ENCODE measurements at regions of chr18 and their contacts with region 1.

Region 1: GRCh38 chr18:48951448-48952286 is 902 bp upstream of the SMAD7 start:
- DNase-seq: peak; percentile 84
- ATAC-seq: peak; percentile 42
- H3K4me3 Mint-ChIP-seq: peak overlapping the region; percentile 97
- H3K27ac Mint-ChIP-seq: peak overlapping the region; percentile 88
- H3K4me1 Mint-ChIP-seq: peaks cover 41% of the 10 kb centered on the region
- H3K27me3 Mint-ChIP-seq: no peaks in the 10 kb centered on the region

Region 2: DNA sequence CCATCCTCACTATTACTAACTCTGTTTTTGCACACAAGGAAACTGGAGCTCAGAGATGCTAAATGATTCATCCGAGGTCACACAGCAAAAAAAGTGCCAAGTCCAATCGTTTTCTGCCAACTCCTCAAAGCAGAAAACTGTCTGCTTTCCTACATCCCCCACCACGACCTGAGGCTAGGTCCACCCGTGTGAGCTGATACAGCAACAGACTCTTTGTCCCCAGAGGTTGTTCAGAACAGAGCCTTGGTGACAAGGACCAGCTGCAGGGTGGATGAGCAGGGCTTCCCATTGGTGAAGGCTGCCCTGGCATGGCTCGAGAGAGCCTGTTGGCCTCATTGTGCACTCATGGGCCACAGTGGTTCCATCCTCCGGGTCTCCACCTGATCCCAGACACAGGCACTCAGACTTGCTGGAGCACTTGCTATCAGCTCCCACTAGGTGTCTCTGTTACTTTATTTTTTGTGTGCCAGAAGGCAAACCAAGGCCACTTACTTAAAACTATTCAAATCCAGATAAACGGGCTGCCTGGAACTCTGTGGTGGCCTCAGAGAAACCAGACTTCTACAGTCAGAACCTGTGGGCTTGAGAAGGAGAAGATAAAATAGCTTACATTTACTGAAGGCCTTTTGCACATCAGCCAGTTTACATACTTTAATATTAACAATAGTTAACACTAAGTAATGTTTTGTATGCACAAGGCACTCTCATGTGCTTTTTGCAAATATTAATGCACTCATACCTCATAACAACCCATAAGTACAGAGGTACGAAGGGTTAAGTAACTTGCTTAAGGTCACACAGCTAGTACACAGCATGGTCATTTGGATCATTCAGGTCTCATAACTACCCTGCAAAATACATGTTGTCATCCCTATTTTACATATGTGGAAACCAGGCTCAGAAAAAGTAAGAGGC is 475.8 kb before region 1 on chr18:
- CTCF ChIA-PET with region 1: no interaction called
- POLR2A ChIA-PET with region 1: no interaction called
- intact Hi-C with region 1: no loop called
- DNase-seq: peak; percentile 44
- ATAC-seq: peak; percentile 68
- H3K4me3 Mint-ChIP-seq: no peak overlapping the region
- H3K27ac Mint-ChIP-seq: no peak overlapping the region
- H3K4me1 Mint-ChIP-seq: no peaks in the 10 kb centered on the region
- H3K27me3 Mint-ChIP-seq: peaks cover 22% of the 10 kb centered on the region

Region 3: DNA sequence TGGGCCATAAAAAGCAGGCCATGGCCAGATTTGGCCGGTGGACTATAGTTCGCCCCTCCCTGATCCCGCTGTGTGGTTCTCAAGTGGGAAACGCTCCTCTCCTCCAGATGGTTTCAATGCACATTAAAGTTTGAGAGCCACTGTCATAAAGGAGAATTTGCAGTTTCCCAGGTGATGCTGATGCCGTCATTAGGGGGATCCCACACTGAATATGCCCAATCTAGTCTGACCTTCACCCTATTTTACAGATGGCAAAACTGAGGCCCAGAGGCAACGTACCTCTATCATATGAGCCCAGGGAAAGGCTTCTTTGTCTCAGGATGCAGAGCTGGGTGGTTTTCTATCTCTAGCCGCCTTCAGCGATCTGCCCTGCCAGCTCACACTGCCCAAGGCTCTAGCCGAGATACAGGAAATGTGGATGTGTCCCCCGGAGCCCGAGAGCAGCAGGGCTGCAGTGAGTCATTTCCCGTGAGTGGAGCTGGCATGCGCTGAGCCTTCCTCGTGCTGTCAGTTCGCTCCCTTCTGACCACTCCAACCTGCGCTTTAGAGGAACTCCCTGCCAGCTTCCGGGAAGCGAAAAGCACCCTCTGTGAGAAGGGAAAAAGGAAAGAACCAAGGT is 117.1 kb before region 1 on chr18:
- CTCF ChIA-PET with region 1: no interaction called
- POLR2A ChIA-PET with region 1: no interaction called
- intact Hi-C with region 1: loop called (anchors 1 to 5 kb)
- DNase-seq: peak; percentile 87
- ATAC-seq: peak; percentile 88
- H3K4me3 Mint-ChIP-seq: peak overlapping the region; percentile 73
- H3K27ac Mint-ChIP-seq: peak overlapping the region; percentile 92
- H3K4me1 Mint-ChIP-seq: peaks cover 73% of the 10 kb centered on the region
- H3K27me3 Mint-ChIP-seq: no peaks in the 10 kb centered on the region

Region 4: DNA sequence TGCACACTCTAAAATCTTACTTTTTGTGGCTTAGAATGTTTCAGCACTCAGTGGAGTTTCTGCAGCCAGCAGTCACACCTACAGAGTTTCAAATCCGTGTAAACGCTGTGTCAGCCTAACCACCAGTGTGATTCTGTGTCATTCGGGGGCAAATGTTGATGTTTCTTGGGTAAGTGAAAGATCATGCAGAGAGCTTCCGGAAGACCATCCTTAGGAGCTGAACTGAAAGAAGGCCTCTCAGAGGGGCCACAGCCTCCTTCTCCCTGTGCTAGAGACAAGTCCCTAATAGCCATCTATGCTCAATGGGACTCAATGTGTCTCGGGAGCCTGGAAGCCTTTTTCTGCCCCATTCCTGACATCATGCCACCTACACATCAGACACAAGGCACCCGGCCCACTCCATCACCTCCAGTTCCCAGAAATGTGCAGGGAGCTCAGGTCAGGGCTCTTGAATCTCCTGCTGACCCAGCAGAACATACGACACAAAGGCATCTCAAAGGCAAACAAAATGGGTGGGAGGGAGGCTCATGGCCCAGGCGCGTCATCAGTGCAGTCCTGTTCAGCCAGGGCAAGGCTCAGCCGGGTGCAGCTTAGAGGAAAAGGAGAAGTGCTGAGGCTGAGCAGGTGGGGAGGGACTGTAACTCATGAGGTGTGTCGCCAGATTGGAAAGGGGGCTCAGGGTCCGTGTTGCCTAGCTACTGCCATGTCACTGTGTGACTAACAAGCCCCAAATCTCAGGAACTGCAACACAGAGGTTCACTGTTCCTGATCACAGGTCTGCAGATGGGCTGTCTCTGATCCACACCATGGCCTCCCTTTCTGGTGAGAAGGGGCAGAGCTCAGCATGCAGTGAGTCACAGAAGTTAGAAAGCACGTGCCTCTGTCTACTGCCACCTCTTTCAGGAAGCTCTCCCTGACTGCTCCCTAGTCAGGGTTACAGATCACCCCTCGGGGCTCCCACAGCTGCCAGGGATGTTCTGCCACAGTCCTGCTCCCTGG is 82.9 kb before region 1 on chr18:
- CTCF ChIA-PET with region 1: no interaction called
- POLR2A ChIA-PET with region 1: interaction called, 7 read pairs
- intact Hi-C with region 1: loop called in 1 of 2 experiments (anchors 1 kb)
- DNase-seq: peak; percentile 73
- ATAC-seq: peak; percentile 79
- H3K4me3 Mint-ChIP-seq: peak overlapping the region; percentile 35
- H3K27ac Mint-ChIP-seq: peak overlapping the region; percentile 85
- H3K4me1 Mint-ChIP-seq: peaks cover 34% of the 10 kb centered on the region
- H3K27me3 Mint-ChIP-seq: no peaks in the 10 kb centered on the region

Region 5: GRCh38 chr18:48934723-48935432 is 16.8 kb before region 1 on chr18:
- CTCF ChIA-PET with region 1: interaction called, 8 read pairs
- POLR2A ChIA-PET with region 1: interaction called, 3 read pairs
- intact Hi-C with region 1: loop called (anchors 1 to 2 kb)
- DNase-seq: peak; percentile 10
- ATAC-seq: no peak
- H3K4me3 Mint-ChIP-seq: peak overlapping the region; percentile 60
- H3K27ac Mint-ChIP-seq: peak overlapping the region; percentile 99
- H3K4me1 Mint-ChIP-seq: peaks cover 90% of the 10 kb centered on the region
- H3K27me3 Mint-ChIP-seq: no peaks in the 10 kb centered on the region

Region 6: DNA sequence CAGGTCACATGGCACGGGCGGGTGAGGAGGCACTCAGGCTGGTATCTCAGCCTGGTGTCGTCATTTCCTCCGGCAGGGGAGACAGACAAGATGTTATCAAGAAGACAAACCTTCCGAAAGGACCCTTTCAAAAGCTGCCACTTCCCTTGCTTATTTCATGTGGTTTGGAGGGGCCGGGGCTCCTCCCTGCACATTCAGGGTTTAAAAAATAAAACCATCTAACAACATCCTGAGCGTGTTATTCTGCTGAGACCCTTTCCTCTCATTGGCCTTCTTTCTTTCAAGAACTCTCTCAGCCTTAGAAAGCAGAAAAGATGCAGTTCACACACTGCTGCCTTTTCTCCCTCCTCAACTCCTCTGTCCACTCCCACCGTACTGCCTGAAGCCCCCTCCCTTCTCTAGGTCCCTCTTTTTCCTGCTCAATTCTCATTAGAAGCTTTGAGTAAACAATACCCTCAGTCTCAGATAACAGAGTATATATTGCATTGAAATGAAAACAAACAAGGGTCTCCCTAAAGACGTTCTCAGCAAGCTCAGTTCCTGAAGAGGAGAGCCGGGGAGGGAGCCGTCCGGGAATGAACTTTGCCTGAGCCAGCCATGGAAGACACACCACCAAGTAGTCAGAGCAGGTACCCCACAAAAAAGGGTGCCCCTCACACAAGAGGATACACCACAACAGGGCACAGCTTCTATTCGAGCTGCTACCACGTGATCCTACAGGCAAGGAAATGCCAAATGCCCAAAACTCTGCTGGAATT is 10.6 kb before region 1 on chr18:
- CTCF ChIA-PET with region 1: interaction called, 8 read pairs
- POLR2A ChIA-PET with region 1: interaction called, 3 read pairs
- intact Hi-C with region 1: loop called in 1 of 2 experiments (anchors 1 kb)
- DNase-seq: peak; percentile 82
- ATAC-seq: peak; percentile 88
- H3K4me3 Mint-ChIP-seq: peak overlapping the region; percentile 65
- H3K27ac Mint-ChIP-seq: peak overlapping the region; percentile 95
- H3K4me1 Mint-ChIP-seq: peaks cover 89% of the 10 kb centered on the region
- H3K27me3 Mint-ChIP-seq: no peaks in the 10 kb centered on the region

Region 7: GRCh38 chr18:48975649-48976204 is 24.1 kb after region 1 on chr18:
- CTCF ChIA-PET with region 1: interaction called, 3 read pairs
- POLR2A ChIA-PET with region 1: no interaction called
- intact Hi-C with region 1: loop called in 1 of 2 experiments (anchors 1 kb)
- DNase-seq: peak; percentile 82
- ATAC-seq: peak; percentile 87
- H3K4me3 Mint-ChIP-seq: peak overlapping the region; percentile 66
- H3K27ac Mint-ChIP-seq: no peak overlapping the region
- H3K4me1 Mint-ChIP-seq: peaks cover 11% of the 10 kb centered on the region
- H3K27me3 Mint-ChIP-seq: peaks cover 12% of the 10 kb centered on the region

Region 8: GRCh38 chr18:49486953-49487710 is 535.5 kb after region 1 on chr18 and contains the start of gene C18orf32:
- CTCF ChIA-PET with region 1: no interaction called
- POLR2A ChIA-PET with region 1: no interaction called
- intact Hi-C with region 1: loop called in 1 of 2 experiments (anchors 1 kb)
- DNase-seq: peak; percentile 96
- ATAC-seq: peak; percentile 92
- H3K4me3 Mint-ChIP-seq: peak within 1 kb of the TSS; percentile 95
- H3K27ac Mint-ChIP-seq: peak within 1 kb of the TSS; percentile 100
- H3K4me1 Mint-ChIP-seq: peaks cover 60% of the 10 kb centered on the region
- H3K27me3 Mint-ChIP-seq: no peaks in the 10 kb centered on the region
- total RNA-seq, gene C18orf32: 12.7 to 20.0 TPM

Region 9: DNA sequence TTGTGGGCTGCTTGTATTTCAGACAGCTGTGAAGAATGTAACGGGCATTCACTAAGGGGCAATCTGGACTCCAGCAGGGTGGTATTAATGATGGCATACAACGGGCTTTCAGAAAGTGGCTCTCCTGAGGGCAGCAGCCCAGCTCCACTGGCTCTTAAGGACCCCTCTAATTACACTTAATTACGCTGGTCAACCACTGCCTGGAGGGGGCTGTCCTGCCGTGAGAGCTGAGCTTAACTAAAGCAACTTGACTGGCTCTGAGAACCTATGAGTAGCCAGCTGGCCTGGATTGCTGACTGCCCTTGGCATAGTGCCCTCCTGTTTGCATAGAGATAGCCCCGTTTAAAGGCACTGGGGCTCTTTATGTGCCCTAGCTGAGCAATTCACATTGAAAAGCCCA is 613.9 kb after region 1 on chr18:
- CTCF ChIA-PET with region 1: no interaction called
- POLR2A ChIA-PET with region 1: no interaction called
- intact Hi-C with region 1: no loop called
- DNase-seq: no peak
- ATAC-seq: no peak
- H3K4me3 Mint-ChIP-seq: no peak overlapping the region
- H3K27ac Mint-ChIP-seq: no peak overlapping the region
- H3K4me1 Mint-ChIP-seq: peaks cover 29% of the 10 kb centered on the region
- H3K27me3 Mint-ChIP-seq: peaks cover 53% of the 10 kb centered on the region

Region 10: GRCh38 chr18:50218432-50219197 is 1266.9 kb after region 1 on chr18:
- CTCF ChIA-PET with region 1: no interaction called
- POLR2A ChIA-PET with region 1: no interaction called
- intact Hi-C with region 1: no loop called
- DNase-seq: peak; percentile 57
- ATAC-seq: peak; percentile 55
- H3K4me3 Mint-ChIP-seq: no peak overlapping the region
- H3K27ac Mint-ChIP-seq: no peak overlapping the region
- H3K4me1 Mint-ChIP-seq: no peaks in the 10 kb centered on the region
- H3K27me3 Mint-ChIP-seq: peaks cover 19% of the 10 kb centered on the region